AG04450 (cell line): ENCODE measurements at regions of chr7 and their contacts with region 1.

Region 1: GRCh38 chr7:130397051-130397757 is 16.9 kb downstream of the CPA1 start:
- DNase-seq: no peak
- H3K4me3 ChIP-seq: no peak overlapping the region
- H3K27ac ChIP-seq: no peak overlapping the region
- H3K27me3 ChIP-seq: no peaks in the 10 kb centered on the region
- CTCF ChIP-seq: no peak

Region 2: GRCh38 chr7:130273081-130273932 is 123.9 kb before region 1 on chr7:
- CTCF ChIA-PET with region 1: no interaction called
- POLR2A ChIA-PET with region 1: interaction called, 12 read pairs
- DNase-seq: peak; percentile 26
- H3K4me3 ChIP-seq: no peak overlapping the region; the same call in 1 of the 2 replicates
- H3K27ac ChIP-seq: no peak overlapping the region
- H3K27me3 ChIP-seq: no peaks in the 10 kb centered on the region
- CTCF ChIP-seq: no peak